ENCODE measurements at regions of chr19 and their contacts with region 1.

Region 1: DNA sequence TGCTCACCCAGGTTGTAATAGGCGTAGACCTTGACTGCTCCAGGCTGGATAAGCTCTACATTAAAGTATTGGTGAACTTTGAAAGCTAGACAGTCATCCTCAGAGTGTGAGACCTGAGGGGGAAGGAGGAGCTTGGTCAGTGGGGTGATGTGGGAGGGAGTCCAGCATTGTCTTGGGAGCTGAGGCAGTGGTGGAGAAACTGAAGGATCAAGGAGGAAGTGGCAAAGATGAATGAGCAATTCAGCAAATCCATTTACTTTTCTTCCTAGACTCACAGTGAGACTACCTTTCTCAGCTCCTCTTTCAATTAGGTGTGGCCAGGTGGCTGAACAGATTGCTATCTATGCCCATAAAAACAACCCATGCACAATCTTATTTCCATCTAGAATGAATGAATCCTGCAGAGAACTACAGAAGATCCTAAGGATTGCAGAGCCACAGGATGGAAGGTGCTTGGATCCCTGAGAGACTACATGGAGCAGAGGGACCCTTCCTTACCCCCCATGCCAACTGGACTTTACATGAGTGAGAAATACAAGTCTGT is 10.3 kb upstream of the TNFSF14 start:
- DNase-seq: no peak
- H3K4me3 ChIP-seq: no peak overlapping the region
- H3K27ac ChIP-seq: no peak overlapping the region
- H3K4me1 ChIP-seq: no peaks in the 10 kb centered on the region
- H3K27me3 ChIP-seq: no peaks in the 10 kb centered on the region
- CTCF ChIP-seq: no peak
- POLR2A ChIP-seq: no peak

Region 2: GRCh38 chr19:4759388-4760284 is 1920.6 kb before region 1 on chr19:
- intact Hi-C with region 1: loop called (anchors 5 kb)
- DNase-seq: peak; percentile 81
- H3K4me3 ChIP-seq: peak overlapping the region in 2 of 3 donors; percentile 36 to 63
- H3K27ac ChIP-seq: no peak overlapping the region
- H3K4me1 ChIP-seq: peaks cover 0 to 7% of the 10 kb centered on the region in 2 donors
- H3K27me3 ChIP-seq: peaks cover 0 to 5% of the 10 kb centered on the region in 2 donors
- CTCF ChIP-seq: no peak
- POLR2A ChIP-seq: no peak

Region 3: GRCh38 chr19:6632002-6632621 is 48.1 kb before region 1 on chr19:
- intact Hi-C with region 1: no loop called
- DNase-seq: peak in 1 of 2 donors; percentile 52
- H3K4me3 ChIP-seq: no peak overlapping the region
- H3K27ac ChIP-seq: no peak overlapping the region
- H3K4me1 ChIP-seq: no peaks in the 10 kb centered on the region
- H3K27me3 ChIP-seq: no peaks in the 10 kb centered on the region
- CTCF ChIP-seq: peak; percentile 70 to 84 (median 77)
- POLR2A ChIP-seq: no peak

Region 4: DNA sequence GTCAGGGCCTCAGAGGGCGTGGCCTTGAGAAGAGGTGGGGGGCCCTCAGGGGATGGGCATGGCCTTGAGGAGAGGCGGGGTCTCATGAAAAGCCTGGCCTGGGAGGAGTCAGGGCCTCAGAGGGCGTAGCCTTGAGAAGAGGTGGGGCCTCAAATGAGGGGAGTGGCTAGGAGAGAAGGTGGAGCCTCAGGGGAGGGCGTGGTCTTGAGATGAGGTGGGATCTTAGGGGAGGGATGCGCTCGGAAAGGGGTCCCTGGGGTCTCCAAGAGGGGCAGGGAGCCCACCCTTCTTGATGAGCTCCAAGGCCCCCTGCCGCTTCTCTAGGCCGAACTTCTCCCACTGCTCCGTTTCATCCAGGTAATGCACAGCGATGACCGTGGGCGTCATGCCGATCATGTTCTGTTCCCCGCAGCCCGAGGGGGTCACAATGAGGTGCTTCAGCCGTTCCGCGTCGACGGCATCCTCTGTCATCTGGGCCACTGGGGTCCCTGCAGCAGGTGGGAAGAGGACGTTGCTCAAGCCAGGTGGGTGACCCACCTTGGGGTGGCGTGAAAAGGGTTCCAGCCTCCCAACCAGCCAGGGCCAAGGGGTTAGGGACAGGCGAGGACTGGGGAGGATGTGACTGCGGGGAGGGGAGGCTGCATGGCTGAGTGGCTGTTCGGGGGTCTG is 14.1 kb after region 1 on chr19:
- intact Hi-C with region 1: no loop called
- DNase-seq: no peak
- H3K4me3 ChIP-seq: no peak overlapping the region
- H3K27ac ChIP-seq: no peak overlapping the region
- H3K4me1 ChIP-seq: no peaks in the 10 kb centered on the region
- H3K27me3 ChIP-seq: no peaks in the 10 kb centered on the region
- CTCF ChIP-seq: no peak
- POLR2A ChIP-seq: no peak

Region 5: GRCh38 chr19:6767081-6767356 is 86.8 kb after region 1 on chr19:
- intact Hi-C with region 1: no loop called
- DNase-seq: no peak
- H3K4me3 ChIP-seq: peak overlapping the region; percentile 17 to 76 (median 55)
- H3K27ac ChIP-seq: peak overlapping the region; percentile 82 to 96
- H3K4me1 ChIP-seq: no peaks in the 10 kb centered on the region
- H3K27me3 ChIP-seq: no peaks in the 10 kb centered on the region
- CTCF ChIP-seq: no peak
- POLR2A ChIP-seq: no peak